RWPE1 (cell line): ENCODE measurements at regions of chr10 and their contacts with region 1.

Region 1: DNA sequence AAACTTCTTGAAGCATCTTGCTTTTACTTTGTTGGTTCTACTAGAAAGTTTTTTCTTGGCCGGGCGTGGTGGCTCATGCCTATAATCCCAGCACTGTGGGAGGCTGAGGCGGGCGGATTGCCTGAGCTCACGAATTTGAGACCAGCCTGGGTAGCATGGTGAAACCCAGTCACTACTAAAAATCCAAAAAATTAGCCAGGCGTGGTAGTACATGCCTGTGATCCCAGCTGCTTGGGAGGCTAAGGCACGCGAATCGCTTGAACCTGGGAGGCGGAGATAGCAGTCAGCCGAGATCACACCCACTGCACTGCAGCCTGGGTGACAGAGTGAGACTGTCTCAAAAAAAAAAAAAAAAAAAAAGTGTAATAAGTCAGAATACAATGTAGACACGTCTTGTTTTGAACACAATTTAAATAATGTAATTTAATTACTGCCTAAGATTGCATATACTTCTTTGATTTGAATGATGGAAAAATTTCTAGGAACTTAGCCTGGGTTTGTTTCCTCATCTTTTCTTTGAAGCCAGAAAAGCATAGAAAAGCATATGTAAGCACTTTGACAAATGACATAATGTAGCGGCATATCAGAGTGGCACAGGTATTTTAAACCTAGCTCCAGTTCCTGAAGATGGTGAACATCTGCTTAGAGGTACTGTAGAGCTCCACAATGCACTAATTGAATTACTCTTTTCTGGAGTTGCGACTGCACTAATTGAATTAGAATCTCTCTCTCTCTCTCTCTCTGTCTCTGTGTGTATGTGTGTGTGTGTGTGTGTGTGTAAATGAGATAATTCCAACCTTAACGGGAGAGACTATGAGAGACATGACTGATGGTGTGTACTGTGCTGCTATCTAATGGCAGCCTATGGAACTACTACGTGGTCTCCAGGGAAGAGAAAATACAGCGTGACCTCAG is 87.8 kb downstream of the BTRC start:
- DNase-seq: peak; percentile 79
- H3K27ac ChIP-seq: no peak overlapping the region
- CTCF ChIP-seq: peak; percentile 75

Region 2: GRCh38 chr10:101297901-101298486 is 143.8 kb before region 1 on chr10:
- CTCF ChIA-PET with region 1: interaction called, 50 read pairs
- POLR2A ChIA-PET with region 1: no interaction called
- DNase-seq: peak; percentile 73
- H3K27ac ChIP-seq: no peak overlapping the region
- CTCF ChIP-seq: peak; percentile 84

Region 3: GRCh38 chr10:101330631-101331225 is 111.1 kb before region 1 on chr10:
- CTCF ChIA-PET with region 1: interaction called, 13 read pairs
- POLR2A ChIA-PET with region 1: no interaction called
- DNase-seq: peak; percentile 66
- H3K27ac ChIP-seq: no peak overlapping the region
- CTCF ChIP-seq: no peak